ENCODE measurements at regions of chr3 and their contacts with region 1.

Region 1: DNA sequence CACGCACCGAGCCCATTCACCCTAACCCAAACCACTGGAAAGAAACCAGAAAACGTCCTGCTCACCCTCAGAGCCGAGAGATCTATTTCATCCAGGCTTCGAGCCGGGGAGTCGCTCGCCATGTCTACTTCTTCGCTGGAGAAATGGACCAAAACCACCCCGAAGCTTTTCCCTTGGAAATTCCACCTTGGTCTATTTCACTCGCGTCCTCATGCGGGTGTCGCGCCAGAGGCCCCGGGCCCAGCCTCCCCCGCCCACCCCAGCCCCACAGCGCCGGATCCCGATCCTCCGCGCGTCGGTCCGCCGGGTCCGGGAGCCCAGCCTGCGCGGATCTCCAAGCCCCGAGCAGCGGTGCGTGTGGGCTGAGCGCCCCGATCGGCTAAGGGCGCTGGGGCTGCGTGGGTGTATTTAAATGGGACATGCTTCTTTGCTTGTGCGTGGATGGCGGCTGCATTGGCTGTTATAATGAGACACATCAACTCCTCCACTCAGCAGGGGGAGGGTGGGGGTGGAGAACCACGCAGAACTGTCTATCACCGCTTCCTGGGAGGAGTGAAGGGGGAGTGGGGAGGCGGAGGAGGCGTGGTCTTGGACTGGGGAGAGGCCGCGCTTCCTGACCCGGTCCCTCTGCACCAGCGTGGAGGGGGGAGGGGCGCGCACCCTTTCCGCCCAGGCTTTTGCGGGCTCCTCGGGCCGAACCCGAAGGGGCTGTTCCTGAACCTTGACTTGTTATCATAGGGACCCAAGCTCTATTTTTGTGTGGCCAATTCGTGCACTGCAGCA is at the start of gene TNIK:
- DNase-seq: peak; percentile 87 to 94
- H3K4me3 ChIP-seq: peak within 1 kb of the TSS; percentile 69
- H3K27ac ChIP-seq: peak within 1 kb of the TSS; percentile 50
- H3K4me1 ChIP-seq: peaks cover 46% of the 10 kb centered on the region
- H3K27me3 ChIP-seq: no peaks in the 10 kb centered on the region
- CTCF ChIP-seq: peak; percentile 38; the same call in 1 of the 2 replicates
- total RNA-seq, gene TNIK: 28.8 and 30.7 TPM in 2 replicates

Region 2: DNA sequence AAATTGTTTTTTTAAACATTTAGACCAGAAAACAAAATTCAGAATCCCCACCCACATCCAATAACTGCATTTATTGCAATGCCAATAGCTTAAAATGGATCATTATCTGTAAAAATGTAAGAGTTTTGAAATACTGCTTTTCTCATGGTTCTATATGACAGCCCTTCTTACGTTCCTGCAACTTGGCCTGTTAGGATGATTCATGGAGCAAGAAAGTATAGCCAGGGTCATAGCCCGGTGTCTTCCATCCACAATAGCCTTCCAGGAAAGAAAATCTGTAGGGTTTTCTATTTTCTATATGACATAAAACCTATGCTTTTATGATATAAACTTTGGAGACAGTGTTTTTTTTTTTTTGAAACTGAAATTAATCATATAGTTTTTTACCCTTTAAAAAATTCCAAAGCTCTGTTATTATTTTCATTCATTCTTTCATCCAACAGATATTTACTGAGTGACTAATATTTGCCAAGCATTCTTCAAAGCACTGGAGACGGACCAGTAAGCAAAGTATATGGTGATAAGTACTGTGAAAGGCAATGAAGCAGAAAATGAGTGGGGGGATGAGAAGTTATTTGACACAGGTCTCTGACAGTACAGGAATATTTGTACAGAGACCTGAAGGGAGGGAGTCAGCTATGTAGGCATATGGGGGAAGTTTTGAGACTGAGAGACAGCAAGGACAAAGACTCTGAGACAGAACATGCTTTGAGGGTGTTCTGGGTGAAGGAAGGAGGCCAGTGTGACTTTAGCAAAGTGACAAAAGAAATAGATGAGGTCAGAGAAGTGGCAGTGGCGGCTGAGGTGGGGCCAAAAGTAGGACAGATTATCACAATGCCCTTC is 404.6 kb before region 1 on chr3:
- CTCF ChIA-PET with region 1: no interaction called
- POLR2A ChIA-PET with region 1: no interaction called
- intact Hi-C with region 1: loop called (anchors 5 kb)
- DNase-seq: peak; percentile 45 to 96
- H3K4me3 ChIP-seq: peak overlapping the region; percentile 26; the same call in 1 of the 2 replicates
- H3K27ac ChIP-seq: peak overlapping the region; percentile 81
- H3K4me1 ChIP-seq: peaks cover 39% of the 10 kb centered on the region
- H3K27me3 ChIP-seq: no peaks in the 10 kb centered on the region
- CTCF ChIP-seq: no peak

Region 3: GRCh38 chr3:171157286-171157685 is 302.8 kb before region 1 on chr3:
- CTCF ChIA-PET with region 1: no interaction called
- POLR2A ChIA-PET with region 1: no interaction called
- intact Hi-C with region 1: loop called (anchors 1 kb)
- DNase-seq: peak in 1 of 2 experiments; percentile 77
- H3K4me3 ChIP-seq: peak overlapping the region; percentile 17; the same call in 1 of the 2 replicates
- H3K27ac ChIP-seq: peak overlapping the region; percentile 93
- H3K4me1 ChIP-seq: peaks cover 53% of the 10 kb centered on the region
- H3K27me3 ChIP-seq: no peaks in the 10 kb centered on the region
- CTCF ChIP-seq: peak; percentile 43; the same call in 1 of the 2 replicates

Region 4: DNA sequence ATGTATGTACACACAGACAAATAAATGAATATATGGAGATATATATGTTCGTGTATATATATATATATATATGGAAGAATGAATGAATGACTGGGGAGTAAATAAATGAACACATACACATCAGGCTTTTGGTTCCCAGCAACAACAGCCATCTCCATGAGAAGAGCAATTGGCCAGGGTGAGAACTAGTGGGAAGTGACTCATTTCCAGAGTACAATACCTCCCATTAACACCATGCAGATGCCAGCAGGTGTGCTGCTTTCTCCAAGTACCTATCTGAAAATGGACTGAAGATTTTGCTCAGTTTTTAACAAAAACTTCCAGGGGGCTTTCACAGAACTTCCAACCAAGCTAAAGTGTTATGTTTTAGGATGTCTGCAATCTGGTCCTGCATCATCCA is 253.8 kb before region 1 on chr3:
- CTCF ChIA-PET with region 1: no interaction called
- POLR2A ChIA-PET with region 1: interaction called, 14 read pairs
- intact Hi-C with region 1: no loop called
- DNase-seq: no peak
- H3K4me3 ChIP-seq: no peak overlapping the region
- H3K27ac ChIP-seq: no peak overlapping the region
- H3K4me1 ChIP-seq: peaks cover 22% of the 10 kb centered on the region
- H3K27me3 ChIP-seq: no peaks in the 10 kb centered on the region
- CTCF ChIP-seq: no peak

Region 5: DNA sequence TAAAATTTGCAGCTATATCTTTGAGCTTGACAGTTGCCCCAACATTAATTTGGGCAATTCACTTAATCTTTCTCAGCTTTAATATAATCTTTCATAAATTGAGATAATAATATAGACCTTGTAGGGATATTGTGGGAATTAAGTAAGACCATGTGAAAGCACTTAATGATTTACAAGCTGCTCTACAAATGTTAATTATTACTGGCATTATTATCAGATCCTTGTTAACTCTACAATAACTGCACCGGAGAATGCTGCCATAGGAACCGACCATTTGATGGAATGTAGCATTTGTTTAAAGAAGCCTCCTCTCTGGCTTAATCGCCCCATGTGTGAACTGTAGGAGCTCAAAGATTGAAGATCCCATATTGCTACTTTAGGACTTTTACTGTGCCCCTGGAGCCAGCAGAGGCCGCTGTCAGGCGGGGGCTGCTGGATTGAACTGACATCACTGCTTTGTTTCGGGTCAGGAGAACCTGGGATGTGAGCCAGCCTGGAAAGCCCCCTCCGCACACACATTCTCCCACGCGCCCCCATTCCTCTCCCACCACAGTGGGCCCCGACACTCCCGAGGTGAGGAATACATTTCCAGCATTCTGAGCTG is 154.3 kb after region 1 on chr3:
- CTCF ChIA-PET with region 1: no interaction called
- POLR2A ChIA-PET with region 1: no interaction called
- intact Hi-C with region 1: no loop called
- DNase-seq: no peak
- H3K4me3 ChIP-seq: no peak overlapping the region
- H3K27ac ChIP-seq: no peak overlapping the region
- H3K4me1 ChIP-seq: no peaks in the 10 kb centered on the region; the same call in 1 of the 2 replicates
- H3K27me3 ChIP-seq: no peaks in the 10 kb centered on the region
- CTCF ChIP-seq: no peak

Region 6: GRCh38 chr3:171874251-171874679 is 414.1 kb after region 1 on chr3:
- CTCF ChIA-PET with region 1: interaction called, 14 read pairs
- POLR2A ChIA-PET with region 1: no interaction called
- intact Hi-C with region 1: no loop called
- DNase-seq: peak; percentile 44 to 49
- H3K4me3 ChIP-seq: no peak overlapping the region
- H3K27ac ChIP-seq: 0 out of 2 replicates have a peak overlapping the region, but pooled peaks have one; percentile 0
- H3K4me1 ChIP-seq: peaks cover 15% of the 10 kb centered on the region; the same call in 1 of the 2 replicates
- H3K27me3 ChIP-seq: no peaks in the 10 kb centered on the region
- CTCF ChIP-seq: no peak

Measured in PC-9 (cell line).